Posterior vena cava (tissue), 2 donors: ENCODE measurements at regions of chr17 and their contacts with region 1.

Region 1: DNA sequence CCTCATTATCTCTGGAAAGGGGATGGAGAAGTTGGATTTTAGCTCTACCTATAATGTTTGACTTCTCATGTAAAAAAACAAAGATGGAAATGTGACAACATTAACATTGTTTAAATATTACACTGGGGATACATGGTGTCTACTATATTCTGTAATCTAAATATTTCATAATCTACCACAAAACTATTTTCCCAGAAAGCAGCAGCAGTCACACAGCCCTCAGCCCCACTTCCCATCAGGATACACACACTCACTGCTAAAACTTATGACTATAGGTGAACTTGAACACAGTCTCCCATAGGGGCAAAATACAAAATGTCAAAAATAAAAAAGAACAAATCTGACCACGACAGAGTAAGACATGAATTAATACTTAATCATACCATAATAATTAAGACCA is 95.7 kb downstream of the KANSL1 start:
- DNase-seq: no peak

Region 2: DNA sequence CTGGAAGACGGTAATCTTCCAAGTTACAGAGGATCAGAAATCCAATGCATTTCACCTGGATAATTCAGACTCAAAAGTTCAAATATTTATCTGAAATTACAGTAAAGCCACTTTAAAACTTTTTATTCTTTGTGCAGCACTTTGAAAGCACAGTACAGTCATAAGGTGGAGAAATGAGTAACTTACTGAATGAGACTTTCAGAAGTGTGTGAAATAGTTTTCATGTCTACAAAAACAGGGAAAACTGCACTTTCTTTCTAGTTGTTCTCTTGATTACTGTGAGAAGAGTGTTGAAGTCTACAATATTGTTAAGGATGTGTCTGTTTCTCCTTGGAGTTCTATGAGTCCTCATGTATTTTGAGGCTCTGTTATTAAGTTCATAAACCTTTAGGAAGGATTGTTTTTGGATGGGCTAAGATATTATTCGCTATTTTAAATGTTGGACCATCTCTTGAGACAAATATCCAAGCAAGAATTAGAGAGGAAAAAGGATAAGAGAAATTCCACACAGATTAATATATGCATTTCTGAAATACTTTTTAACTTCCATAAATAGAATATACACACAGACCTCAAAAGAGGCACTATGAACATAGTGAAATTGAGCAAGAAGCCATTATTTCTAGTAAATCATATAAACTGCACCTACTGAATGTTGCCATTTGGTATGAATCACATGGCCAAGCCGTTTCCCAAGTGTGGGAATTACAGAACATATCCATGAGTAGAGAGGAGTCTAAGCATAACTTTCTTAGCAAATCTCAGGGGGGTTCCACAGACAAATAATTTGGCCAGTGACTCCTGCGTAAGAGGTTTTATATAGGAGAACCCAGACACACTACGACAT is 523.4 kb before region 1 on chr17:
- intact Hi-C with region 1: loop called in 1 of 2 experiments (anchors 10 kb)
- DNase-seq: no peak